HCT116 (cell line): ENCODE measurements at regions of chr6 and their contacts with region 1.

Region 1: DNA sequence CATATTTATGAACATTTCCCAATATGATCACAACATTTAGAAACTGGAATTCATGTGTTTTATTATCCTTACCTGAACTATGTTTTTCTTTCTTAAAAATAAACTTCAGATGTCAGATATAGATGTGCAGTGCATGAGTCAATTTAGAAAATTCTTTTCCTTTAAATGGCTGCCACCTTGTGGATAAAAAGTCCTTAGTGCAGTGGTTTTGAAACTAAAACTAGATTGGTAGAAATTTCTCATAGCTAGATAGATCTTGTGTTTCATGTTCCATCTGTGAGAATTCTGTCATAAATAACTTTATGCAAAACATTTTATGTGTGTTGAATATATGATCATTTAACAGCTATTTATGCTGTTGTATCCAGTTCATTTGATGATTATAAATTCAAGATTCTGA is 134.9 kb downstream of the KLHL32 start:
- DNase-seq: peak; percentile 10
- ATAC-seq: peak; percentile 70
- H3K4me3 ChIP-seq: no peak overlapping the region
- H3K27ac ChIP-seq: no peak overlapping the region
- H3K4me1 ChIP-seq: peaks cover 0 to 1% of the 10 kb centered on the region in 2 experiments; a peak in 1 of 4 replicates
- H3K27me3 ChIP-seq: no peaks in the 10 kb centered on the region
- CTCF ChIP-seq: peak; percentile 34 to 70 (median 56); a peak in 5 of 6 replicates
- POLR2A ChIP-seq: no peak
- RAD21 ChIP-seq: peak; percentile 77

Region 2: GRCh38 chr6:95364016-95364604 is 1695.4 kb before region 1 on chr6:
- CTCF ChIA-PET with region 1: no interaction called
- POLR2A ChIA-PET with region 1: no interaction called
- RAD21 ChIA-PET with region 1: no interaction called
- intact Hi-C with region 1: loop called (anchors 5 kb)
- DNase-seq: peak; percentile 8
- ATAC-seq: no peak
- H3K4me3 ChIP-seq: no peak overlapping the region
- H3K27ac ChIP-seq: no peak overlapping the region
- H3K4me1 ChIP-seq: no peaks in the 10 kb centered on the region
- H3K27me3 ChIP-seq: no peaks in the 10 kb centered on the region
- CTCF ChIP-seq: peak in 2 of 3 experiments; percentile 34 to 66; a peak in 5 of 6 replicates
- POLR2A ChIP-seq: no peak
- RAD21 ChIP-seq: peak; percentile 58

Region 3: DNA sequence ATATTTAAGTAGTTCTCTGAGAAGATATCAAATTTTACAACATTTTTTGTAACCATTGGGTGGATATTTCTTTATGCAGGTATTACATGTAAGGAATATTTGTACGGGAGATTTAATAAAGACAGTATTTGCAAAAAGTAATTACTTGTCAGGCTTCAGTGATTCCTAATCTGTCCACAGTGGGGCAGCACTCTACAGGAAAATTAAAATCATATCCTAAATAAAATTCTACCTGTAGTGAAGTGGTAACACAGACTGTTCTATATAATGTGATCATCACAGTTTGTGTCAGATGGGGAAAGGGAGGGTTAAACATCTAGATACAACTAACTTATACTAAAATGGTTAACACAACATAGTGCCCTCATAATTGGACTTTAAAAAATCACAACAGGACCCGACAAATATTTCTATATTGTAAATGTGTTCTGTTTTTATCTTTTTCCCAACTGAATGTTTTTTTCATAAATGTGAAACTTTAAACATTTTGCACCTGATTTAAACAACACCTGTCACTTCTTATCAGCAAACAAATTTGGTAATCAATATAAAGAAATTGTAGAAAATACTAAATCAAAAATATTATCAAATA is 1627.7 kb before region 1 on chr6:
- CTCF ChIA-PET with region 1: no interaction called
- POLR2A ChIA-PET with region 1: no interaction called
- RAD21 ChIA-PET with region 1: no interaction called
- intact Hi-C with region 1: loop called (anchors 2 kb)
- DNase-seq: peak; percentile 23
- ATAC-seq: peak; percentile 46
- H3K4me3 ChIP-seq: no peak overlapping the region
- H3K27ac ChIP-seq: no peak overlapping the region
- H3K4me1 ChIP-seq: no peaks in the 10 kb centered on the region
- H3K27me3 ChIP-seq: no peaks in the 10 kb centered on the region
- CTCF ChIP-seq: peak; percentile 34 to 79 (median 59); a peak in 5 of 6 replicates
- POLR2A ChIP-seq: no peak
- RAD21 ChIP-seq: peak; percentile 69

Region 4: GRCh38 chr6:96391776-96392360 is 667.6 kb before region 1 on chr6:
- CTCF ChIA-PET with region 1: interaction called, 3 read pairs
- POLR2A ChIA-PET with region 1: no interaction called
- RAD21 ChIA-PET with region 1: no interaction called
- intact Hi-C with region 1: loop called (anchors 10 kb)
- DNase-seq: no peak
- ATAC-seq: no peak
- H3K4me3 ChIP-seq: no peak overlapping the region
- H3K27ac ChIP-seq: no peak overlapping the region
- H3K4me1 ChIP-seq: no peaks in the 10 kb centered on the region
- H3K27me3 ChIP-seq: no peaks in the 10 kb centered on the region
- CTCF ChIP-seq: no peak
- POLR2A ChIP-seq: no peak
- RAD21 ChIP-seq: no peak

Region 5: GRCh38 chr6:96542702-96543101 is 516.8 kb before region 1 on chr6:
- CTCF ChIA-PET with region 1: interaction called, 8 read pairs
- POLR2A ChIA-PET with region 1: no interaction called
- RAD21 ChIA-PET with region 1: no interaction called
- intact Hi-C with region 1: loop called (anchors 5 kb)
- DNase-seq: no peak
- ATAC-seq: peak; percentile 58
- H3K4me3 ChIP-seq: no peak overlapping the region
- H3K27ac ChIP-seq: no peak overlapping the region
- H3K4me1 ChIP-seq: no peaks in the 10 kb centered on the region
- H3K27me3 ChIP-seq: no peaks in the 10 kb centered on the region
- CTCF ChIP-seq: peak; percentile 26 to 60 (median 46); a peak in 4 of 6 replicates
- POLR2A ChIP-seq: no peak
- RAD21 ChIP-seq: peak; percentile 49; the same call in 1 of the 2 replicates

Region 6: GRCh38 chr6:96626759-96627364 is 432.6 kb before region 1 on chr6:
- CTCF ChIA-PET with region 1: interaction called, 11 read pairs
- POLR2A ChIA-PET with region 1: interaction called, 3 read pairs
- RAD21 ChIA-PET with region 1: no interaction called
- intact Hi-C with region 1: loop called (anchors 2 kb)
- DNase-seq: peak; percentile 22
- ATAC-seq: peak; percentile 93
- H3K4me3 ChIP-seq: no peak overlapping the region
- H3K27ac ChIP-seq: no peak overlapping the region
- H3K4me1 ChIP-seq: peaks cover 0 to 5% of the 10 kb centered on the region in 2 experiments; a peak in 1 of 4 replicates
- H3K27me3 ChIP-seq: no peaks in the 10 kb centered on the region
- CTCF ChIP-seq: peak in 2 of 3 experiments; percentile 44 to 51; a peak in 3 of 6 replicates
- POLR2A ChIP-seq: no peak
- RAD21 ChIP-seq: peak; percentile 72